Activated T-helper 1 cell treated with anti-CD3 and anti-CD28 coated beads, Interleukin-12 subunit alpha, Interleukin-12 subunit beta, Interleukin-2, Interleukin-4 antibody, amounts not matched to agents 30 ng/mL and 10 ng/mL and 1 ng/mL, durations not matched to agents 14 hours and 24 hours and 36 hours (primary cell): ENCODE measurements at regions of chr7 and their contacts with region 1.

Region 1: GRCh38 chr7:149067876-149068275 is 22.6 kb downstream of the ZNF786 start:
- DNase-seq: no peak
- H3K4me3 Mint-ChIP-seq: peak overlapping the region; percentile 12
- H3K27ac Mint-ChIP-seq: no peak overlapping the region
- H3K4me1 Mint-ChIP-seq: peaks cover 8% of the 10 kb centered on the region
- H3K27me3 Mint-ChIP-seq: no peaks in the 10 kb centered on the region

Region 2: DNA sequence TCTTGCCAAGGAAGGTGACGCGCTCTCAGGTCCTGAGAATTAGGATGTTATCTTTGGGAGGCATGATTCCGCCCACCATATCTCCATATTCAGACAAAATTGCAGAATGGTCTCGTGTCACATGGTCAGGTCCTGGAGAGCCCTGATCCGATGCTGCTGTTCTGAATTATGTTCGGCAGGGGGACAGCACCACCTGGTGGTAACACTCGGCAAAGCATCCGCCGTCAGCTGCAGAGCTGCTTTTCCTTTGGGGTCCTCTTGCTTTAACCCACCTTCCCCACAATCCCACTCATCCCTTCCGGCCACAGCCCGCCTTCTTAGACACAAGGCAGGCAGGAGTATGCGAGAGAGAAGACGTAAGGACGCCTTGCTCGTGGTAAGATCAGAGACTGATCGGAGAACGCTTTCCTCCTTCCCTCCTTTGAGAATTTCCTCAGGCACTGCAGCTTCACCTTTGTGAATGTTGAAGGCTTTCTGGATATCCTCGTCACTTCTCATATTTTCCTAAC is 805.1 kb before region 1 on chr7:
- intact Hi-C with region 1: loop called (anchors 10 kb)
- DNase-seq: peak; percentile 22
- H3K4me3 Mint-ChIP-seq: peak overlapping the region; percentile 30
- H3K27ac Mint-ChIP-seq: no peak overlapping the region
- H3K4me1 Mint-ChIP-seq: peaks cover 8% of the 10 kb centered on the region
- H3K27me3 Mint-ChIP-seq: peaks cover 7% of the 10 kb centered on the region

Region 3: GRCh38 chr7:148944935-148945934 is 122.6 kb before region 1 on chr7:
- intact Hi-C with region 1: no loop called
- DNase-seq: no peak
- H3K4me3 Mint-ChIP-seq: no peak overlapping the region
- H3K27ac Mint-ChIP-seq: no peak overlapping the region
- H3K4me1 Mint-ChIP-seq: peaks cover 19% of the 10 kb centered on the region
- H3K27me3 Mint-ChIP-seq: no peaks in the 10 kb centered on the region

Region 4: GRCh38 chr7:149005241-149006050 is 62.4 kb before region 1 on chr7:
- intact Hi-C with region 1: loop called (anchors 1 kb)
- DNase-seq: peak; percentile 65
- H3K4me3 Mint-ChIP-seq: no peak overlapping the region
- H3K27ac Mint-ChIP-seq: no peak overlapping the region
- H3K4me1 Mint-ChIP-seq: no peaks in the 10 kb centered on the region
- H3K27me3 Mint-ChIP-seq: no peaks in the 10 kb centered on the region

Region 5: GRCh38 chr7:149090397-149091195 is 22.7 kb after region 1 on chr7 and contains the start of gene ZNF786:
- intact Hi-C with region 1: loop called (anchors 1 kb)
- DNase-seq: peak; percentile 87
- H3K4me3 Mint-ChIP-seq: peak within 1 kb of the TSS; percentile 99
- H3K27ac Mint-ChIP-seq: peak within 1 kb of the TSS; percentile 100
- H3K4me1 Mint-ChIP-seq: peaks cover 17% of the 10 kb centered on the region
- H3K27me3 Mint-ChIP-seq: peaks cover 2% of the 10 kb centered on the region
- total RNA-seq, gene ZNF786: 9.9 and 10.9 TPM in 2 replicates